Motor neuron (in vitro differentiated cells): ENCODE measurements at regions of chr7 and their contacts with region 1.

Region 1: GRCh38 chr7:104156842-104157277 is 51.0 kb downstream of the ORC5 start:
- ATAC-seq: no peak
- H3K4me3 ChIP-seq: no peak overlapping the region
- H3K27ac ChIP-seq: no peak overlapping the region
- H3K4me1 ChIP-seq: no peaks in the 10 kb centered on the region

Region 2: GRCh38 chr7:103573479-103574058 is 583.3 kb before region 1 on chr7:
- in situ Hi-C with region 1: loop called in 8 of 9 experiments (anchors 25 kb)
- ATAC-seq: no peak
- H3K4me3 ChIP-seq: no peak overlapping the region
- H3K27ac ChIP-seq: no peak overlapping the region
- H3K4me1 ChIP-seq: no peaks in the 10 kb centered on the region

Region 3: DNA sequence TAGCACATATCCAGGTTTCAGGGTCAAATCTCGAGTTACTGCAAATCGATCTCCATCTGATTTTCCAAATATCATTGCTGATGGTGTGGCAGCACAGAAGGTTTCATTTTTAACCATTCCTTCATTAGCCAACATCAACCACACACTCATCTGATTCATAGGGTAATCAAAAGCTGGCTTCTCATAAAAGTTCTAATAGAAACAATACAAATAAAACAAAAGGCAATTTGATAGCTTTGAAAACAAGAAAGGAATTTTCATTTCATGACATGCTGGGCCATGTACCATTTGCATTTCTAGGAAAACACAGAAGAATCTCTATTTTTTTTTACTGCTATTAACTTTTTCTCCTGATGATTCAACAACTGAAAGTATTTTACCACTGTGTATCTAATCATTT is 563.2 kb before region 1 on chr7:
- in situ Hi-C with region 1: loop called in 2 of 9 experiments (anchors 25 kb)
- ATAC-seq: peak in 1 of 8 experiments; percentile 32
- H3K4me3 ChIP-seq: no peak overlapping the region
- H3K27ac ChIP-seq: no peak overlapping the region
- H3K4me1 ChIP-seq: no peaks in the 10 kb centered on the region

Region 4: GRCh38 chr7:104382616-104383015 is 225.8 kb after region 1 on chr7:
- in situ Hi-C with region 1: no loop called
- ATAC-seq: no peak
- H3K4me3 ChIP-seq: no peak overlapping the region
- H3K27ac ChIP-seq: no peak overlapping the region
- H3K4me1 ChIP-seq: no peaks in the 10 kb centered on the region